HCT116 (cell line): ENCODE measurements at regions of chr15 and their contacts with region 1.

Region 1: DNA sequence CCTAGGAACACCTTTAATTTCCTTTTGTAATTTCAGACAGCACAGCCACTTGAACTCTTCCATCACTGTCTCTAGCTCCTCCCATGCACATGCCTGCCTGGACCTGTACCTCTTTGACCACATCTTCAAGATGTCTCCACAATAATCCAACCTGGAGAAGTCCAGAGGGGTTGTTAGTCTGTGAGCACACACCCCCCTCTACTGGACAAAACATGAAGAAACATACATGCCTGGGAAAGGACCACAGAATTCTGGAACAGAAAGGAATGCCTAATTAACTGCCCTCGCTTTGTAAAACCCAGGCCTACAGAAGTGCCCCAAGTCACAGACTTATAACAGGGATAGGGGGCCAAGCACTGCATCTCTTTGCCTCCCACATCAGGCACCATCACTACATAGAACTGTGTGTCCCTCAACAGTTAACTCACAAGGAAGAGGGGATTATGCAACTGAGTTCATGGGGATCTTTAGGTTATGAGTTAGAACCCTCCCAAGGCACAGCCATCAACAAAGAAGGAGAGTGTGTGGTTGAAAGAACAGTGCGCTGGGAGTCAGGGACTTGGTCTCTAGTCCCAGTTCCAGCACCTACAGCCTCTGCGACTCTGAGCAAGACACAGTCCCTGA is 61.7 kb downstream of the FMN1 start:
- DNase-seq: peak; percentile 59
- ATAC-seq: peak; percentile 97
- H3K4me3 ChIP-seq: no peak overlapping the region
- H3K27ac ChIP-seq: no peak overlapping the region
- H3K4me1 ChIP-seq: peaks cover 6 to 7% of the 10 kb centered on the region in 2 experiments; a peak in 2 of 4 replicates
- H3K27me3 ChIP-seq: no peaks in the 10 kb centered on the region
- CTCF ChIP-seq: peak; percentile 70 to 82 (median 79); a peak in 5 of 6 replicates
- POLR2A ChIP-seq: no peak
- RAD21 ChIP-seq: peak; percentile 84

Region 2: DNA sequence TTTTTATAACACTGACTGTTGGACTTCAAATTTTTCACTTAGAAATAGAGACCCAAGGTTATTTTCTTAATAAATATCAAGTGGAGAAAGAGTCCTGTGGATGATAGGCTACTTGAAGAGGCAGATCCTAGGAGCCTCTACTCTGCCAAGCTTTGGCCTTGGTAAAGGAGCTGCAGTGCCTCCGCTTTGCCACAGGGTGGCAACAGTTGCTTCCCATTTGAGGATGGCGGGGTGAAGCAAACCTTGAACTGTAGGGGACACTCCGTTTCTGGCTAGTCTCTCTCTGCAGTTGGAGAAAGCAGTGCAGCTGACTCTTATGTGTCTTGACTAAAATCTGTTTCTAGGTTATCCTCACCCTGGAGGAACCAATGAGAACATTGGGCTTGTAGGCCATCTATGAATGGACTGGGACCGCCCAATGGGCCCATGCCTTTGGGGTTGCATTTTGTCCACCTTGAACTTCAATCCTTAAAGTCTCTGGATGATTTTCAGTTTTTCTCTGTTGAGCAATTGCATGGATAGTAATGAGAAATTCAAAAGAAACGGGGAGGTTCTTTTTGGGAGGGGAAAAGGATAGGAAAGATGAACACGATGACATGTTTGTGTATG is 481.5 kb before region 1 on chr15:
- CTCF ChIA-PET with region 1: interaction called, 15 read pairs
- POLR2A ChIA-PET with region 1: no interaction called
- RAD21 ChIA-PET with region 1: no interaction called
- intact Hi-C with region 1: loop called (anchors 5 kb)
- DNase-seq: peak; percentile 23
- ATAC-seq: peak; percentile 90
- H3K4me3 ChIP-seq: no peak overlapping the region
- H3K27ac ChIP-seq: no peak overlapping the region
- H3K4me1 ChIP-seq: no peaks in the 10 kb centered on the region
- H3K27me3 ChIP-seq: no peaks in the 10 kb centered on the region
- CTCF ChIP-seq: peak; percentile 60 to 96 (median 88); a peak in 5 of 6 replicates
- POLR2A ChIP-seq: no peak
- RAD21 ChIP-seq: peak; percentile 47

Region 3: DNA sequence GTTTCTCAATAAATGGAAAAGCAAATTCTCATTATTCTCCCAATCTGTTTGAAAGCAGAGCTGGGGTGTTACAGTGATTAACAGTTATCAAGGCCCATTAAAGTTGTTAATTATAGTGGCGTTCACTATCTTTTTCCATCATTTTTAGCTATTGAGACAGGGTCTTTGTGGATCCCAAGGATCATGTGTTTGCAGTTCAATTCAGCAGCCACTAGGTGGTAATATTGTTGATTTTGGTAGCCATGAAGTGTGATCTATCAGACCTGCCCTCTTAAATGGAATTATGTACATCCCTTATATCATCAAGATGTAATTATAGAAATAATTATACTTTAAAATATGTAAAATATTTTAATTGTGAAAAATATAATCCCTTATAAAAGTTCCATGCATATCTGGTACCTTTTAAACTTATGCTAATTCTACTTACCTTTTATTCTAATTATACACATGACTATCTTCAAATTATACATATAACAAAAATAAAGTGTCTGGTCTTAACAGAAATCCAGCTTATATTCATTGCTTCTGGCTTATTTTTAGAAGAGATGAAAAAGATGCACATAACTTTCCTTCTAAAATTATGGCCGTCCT is 288.6 kb before region 1 on chr15:
- CTCF ChIA-PET with region 1: interaction called, 8 read pairs
- POLR2A ChIA-PET with region 1: no interaction called
- RAD21 ChIA-PET with region 1: no interaction called
- intact Hi-C with region 1: loop called (anchors 5 kb)
- DNase-seq: peak; percentile 40
- ATAC-seq: peak; percentile 61
- H3K4me3 ChIP-seq: no peak overlapping the region
- H3K27ac ChIP-seq: no peak overlapping the region
- H3K4me1 ChIP-seq: no peaks in the 10 kb centered on the region
- H3K27me3 ChIP-seq: peaks cover 18% of the 10 kb centered on the region; the same call in 1 of the 2 replicates
- CTCF ChIP-seq: peak; percentile 45 to 69 (median 68); a peak in 5 of 6 replicates
- POLR2A ChIP-seq: no peak
- RAD21 ChIP-seq: peak; percentile 61

Region 4: DNA sequence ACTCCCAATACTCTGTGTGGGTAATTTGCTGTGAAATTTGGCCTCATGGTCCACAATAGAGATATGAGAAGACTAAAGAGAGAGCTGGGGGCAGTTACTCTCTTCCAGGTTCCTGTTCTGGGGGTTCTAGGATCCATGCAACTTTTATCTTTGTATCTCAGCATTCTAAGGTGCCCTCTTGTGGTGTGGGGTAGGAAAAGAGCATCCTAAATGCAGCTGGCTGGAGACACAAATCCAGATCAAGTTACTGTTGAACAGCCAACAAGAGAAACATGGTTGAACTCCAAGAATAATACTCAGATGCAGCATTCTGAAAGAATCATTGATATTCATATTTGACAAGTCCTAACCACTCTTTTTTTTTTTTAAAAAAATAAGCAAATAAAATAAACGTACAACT is 176.8 kb before region 1 on chr15:
- CTCF ChIA-PET with region 1: interaction called, 4 read pairs
- POLR2A ChIA-PET with region 1: no interaction called
- RAD21 ChIA-PET with region 1: interaction called in 1 of 2 experiments, 4 read pairs
- intact Hi-C with region 1: loop called (anchors 5 kb)
- DNase-seq: peak; percentile 33
- ATAC-seq: peak; percentile 77
- H3K4me3 ChIP-seq: no peak overlapping the region
- H3K27ac ChIP-seq: no peak overlapping the region
- H3K4me1 ChIP-seq: no peaks in the 10 kb centered on the region
- H3K27me3 ChIP-seq: no peaks in the 10 kb centered on the region
- CTCF ChIP-seq: peak; percentile 54 to 68 (median 68); a peak in 5 of 6 replicates
- POLR2A ChIP-seq: no peak
- RAD21 ChIP-seq: peak; percentile 59

Region 5: DNA sequence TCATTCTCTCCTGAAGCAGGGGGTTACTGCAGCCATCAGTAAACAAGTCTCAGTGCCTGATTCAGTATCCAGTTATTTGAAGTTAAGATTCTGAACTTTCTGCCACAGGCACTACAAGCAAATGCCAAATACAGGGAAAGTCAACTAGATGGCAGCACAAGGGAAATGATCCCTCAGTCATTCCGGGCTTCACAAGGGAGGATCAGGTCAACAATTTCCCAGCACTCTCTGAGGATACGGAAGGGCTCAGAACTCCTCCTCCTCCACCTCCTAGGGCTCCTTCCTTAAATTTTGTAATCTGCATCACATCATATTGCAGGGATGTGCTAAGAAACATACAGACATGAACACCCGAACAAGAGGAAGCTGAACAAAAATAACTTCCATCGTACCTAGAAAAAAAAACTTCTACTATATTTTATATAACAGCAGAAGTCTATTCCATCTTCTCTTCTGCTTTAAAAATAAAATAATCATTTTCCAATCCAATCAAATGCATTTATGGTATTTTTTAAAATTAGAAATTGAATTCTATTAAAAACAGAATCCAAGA is 125.5 kb before region 1 on chr15:
- CTCF ChIA-PET with region 1: interaction called, 5 read pairs
- POLR2A ChIA-PET with region 1: no interaction called
- RAD21 ChIA-PET with region 1: no interaction called
- intact Hi-C with region 1: loop called (anchors 5 kb)
- DNase-seq: peak; percentile 35
- ATAC-seq: peak; percentile 94
- H3K4me3 ChIP-seq: no peak overlapping the region
- H3K27ac ChIP-seq: no peak overlapping the region
- H3K4me1 ChIP-seq: no peaks in the 10 kb centered on the region; a peak in 1 of 4 replicates
- H3K27me3 ChIP-seq: no peaks in the 10 kb centered on the region
- CTCF ChIP-seq: peak; percentile 9 to 40 (median 38); a peak in 4 of 6 replicates
- POLR2A ChIP-seq: no peak
- RAD21 ChIP-seq: peak; percentile 42; the same call in 1 of the 2 replicates

Region 6: DNA sequence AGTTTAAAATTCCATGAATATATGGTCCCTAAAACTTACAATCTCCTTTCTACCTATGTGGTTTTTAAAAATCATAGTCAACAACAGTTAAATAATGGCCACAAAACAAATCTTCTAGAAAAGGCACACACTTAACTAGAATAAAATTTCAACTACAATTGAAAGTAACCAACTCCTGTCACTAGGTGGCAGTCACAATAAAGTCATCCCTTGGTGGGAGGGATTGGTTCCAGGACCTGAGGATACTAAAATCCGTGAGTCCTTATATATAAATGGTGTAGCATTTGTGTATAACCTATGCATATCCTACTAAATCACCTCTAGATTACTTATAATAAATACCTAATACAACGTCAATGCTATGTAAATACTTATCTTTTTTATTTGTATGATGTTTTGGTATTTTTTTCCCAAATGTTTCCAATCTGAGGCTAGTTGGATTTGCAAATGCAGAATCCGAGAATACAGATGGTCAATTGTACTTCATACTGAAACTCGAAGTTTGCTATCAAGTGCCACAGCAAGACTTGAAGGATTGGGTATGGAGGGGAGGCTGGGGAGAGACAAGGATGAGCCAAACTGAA is 110.9 kb before region 1 on chr15:
- CTCF ChIA-PET with region 1: interaction called, 32 read pairs
- POLR2A ChIA-PET with region 1: no interaction called
- RAD21 ChIA-PET with region 1: interaction called, 5 read pairs
- intact Hi-C with region 1: loop called (anchors 1 kb)
- DNase-seq: peak; percentile 47
- ATAC-seq: peak; percentile 81
- H3K4me3 ChIP-seq: no peak overlapping the region
- H3K27ac ChIP-seq: no peak overlapping the region
- H3K4me1 ChIP-seq: peaks cover 10 to 13% of the 10 kb centered on the region in 2 experiments; a peak in 3 of 4 replicates
- H3K27me3 ChIP-seq: no peaks in the 10 kb centered on the region
- CTCF ChIP-seq: peak; percentile 39 to 77 (median 62); a peak in 5 of 6 replicates
- POLR2A ChIP-seq: no peak
- RAD21 ChIP-seq: peak; percentile 69

Region 7: DNA sequence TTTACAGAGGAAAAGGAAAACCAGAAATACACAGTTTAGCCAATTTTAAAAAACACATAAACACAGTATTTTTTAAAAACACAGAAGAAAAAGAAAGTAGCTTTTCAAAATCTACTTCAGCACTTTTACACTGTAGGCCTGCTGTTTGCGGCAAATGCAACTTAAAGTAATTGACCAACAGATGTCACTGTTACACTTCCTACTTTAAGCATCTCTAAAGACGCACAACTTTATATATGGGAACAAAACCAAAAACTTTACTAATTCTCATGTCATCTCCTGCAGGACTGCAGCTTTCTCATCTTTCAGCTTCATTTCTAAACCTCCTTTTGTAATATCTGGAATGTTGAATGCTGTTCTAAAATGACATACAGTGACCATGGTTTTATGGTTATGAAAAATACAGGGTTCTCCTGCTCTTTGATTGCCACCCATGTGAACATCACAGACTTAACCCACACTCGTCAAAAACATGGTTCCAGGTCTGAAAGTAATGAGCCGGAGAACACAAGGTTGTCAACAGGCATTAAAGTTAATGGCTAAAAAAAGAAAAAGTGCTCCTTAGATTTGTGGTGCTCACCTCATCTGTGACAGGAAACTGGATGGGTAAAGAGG is 46.2 kb before region 1 on chr15:
- CTCF ChIA-PET with region 1: interaction called, 83 read pairs
- POLR2A ChIA-PET with region 1: interaction called, 4 read pairs
- RAD21 ChIA-PET with region 1: interaction called, 8 to 15 read pairs
- intact Hi-C with region 1: loop called (anchors 1 kb)
- DNase-seq: peak; percentile 42
- ATAC-seq: peak; percentile 74
- H3K4me3 ChIP-seq: no peak overlapping the region
- H3K27ac ChIP-seq: no peak overlapping the region
- H3K4me1 ChIP-seq: peaks cover 13 to 21% of the 10 kb centered on the region in 2 experiments
- H3K27me3 ChIP-seq: no peaks in the 10 kb centered on the region
- CTCF ChIP-seq: peak; percentile 44 to 72 (median 53); a peak in 5 of 6 replicates
- POLR2A ChIP-seq: no peak
- RAD21 ChIP-seq: peak; percentile 70